ENCODE measurements at regions of chr2 and their contacts with region 1.

Region 1: GRCh38 chr2:157302492-157303099 is 23.0 kb downstream of the ERMN start:
- DNase-seq: peak; percentile 49
- H3K4me3 Mint-ChIP-seq: no peak overlapping the region
- H3K27ac Mint-ChIP-seq: no peak overlapping the region
- H3K4me1 Mint-ChIP-seq: peaks cover 24% of the 10 kb centered on the region
- H3K27me3 Mint-ChIP-seq: peaks cover 6% of the 10 kb centered on the region

Region 2: DNA sequence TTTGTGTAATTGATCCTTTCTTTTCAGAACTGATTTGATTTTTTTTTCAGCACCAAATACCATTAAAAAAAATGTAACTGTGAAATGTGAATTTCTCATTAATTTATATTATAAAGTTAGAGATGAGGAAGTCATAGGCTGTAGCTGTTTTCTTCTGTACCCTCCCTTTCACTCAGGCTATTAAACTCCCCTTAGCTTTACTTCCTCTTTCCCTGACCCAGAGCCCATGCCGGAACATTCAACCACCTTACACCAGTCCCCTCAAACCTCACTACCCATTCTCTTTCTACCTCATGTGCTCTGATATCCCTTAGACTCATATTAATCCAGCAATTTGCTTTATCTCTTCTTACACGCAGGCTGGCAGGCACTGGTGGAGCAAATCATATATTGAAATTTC is 32.7 kb before region 1 on chr2:
- CTCF ChIA-PET with region 1: no interaction called
- POLR2A ChIA-PET with region 1: no interaction called
- DNase-seq: no peak
- H3K4me3 Mint-ChIP-seq: no peak overlapping the region
- H3K27ac Mint-ChIP-seq: no peak overlapping the region
- H3K4me1 Mint-ChIP-seq: peaks cover 20% of the 10 kb centered on the region
- H3K27me3 Mint-ChIP-seq: no peaks in the 10 kb centered on the region

Region 3: DNA sequence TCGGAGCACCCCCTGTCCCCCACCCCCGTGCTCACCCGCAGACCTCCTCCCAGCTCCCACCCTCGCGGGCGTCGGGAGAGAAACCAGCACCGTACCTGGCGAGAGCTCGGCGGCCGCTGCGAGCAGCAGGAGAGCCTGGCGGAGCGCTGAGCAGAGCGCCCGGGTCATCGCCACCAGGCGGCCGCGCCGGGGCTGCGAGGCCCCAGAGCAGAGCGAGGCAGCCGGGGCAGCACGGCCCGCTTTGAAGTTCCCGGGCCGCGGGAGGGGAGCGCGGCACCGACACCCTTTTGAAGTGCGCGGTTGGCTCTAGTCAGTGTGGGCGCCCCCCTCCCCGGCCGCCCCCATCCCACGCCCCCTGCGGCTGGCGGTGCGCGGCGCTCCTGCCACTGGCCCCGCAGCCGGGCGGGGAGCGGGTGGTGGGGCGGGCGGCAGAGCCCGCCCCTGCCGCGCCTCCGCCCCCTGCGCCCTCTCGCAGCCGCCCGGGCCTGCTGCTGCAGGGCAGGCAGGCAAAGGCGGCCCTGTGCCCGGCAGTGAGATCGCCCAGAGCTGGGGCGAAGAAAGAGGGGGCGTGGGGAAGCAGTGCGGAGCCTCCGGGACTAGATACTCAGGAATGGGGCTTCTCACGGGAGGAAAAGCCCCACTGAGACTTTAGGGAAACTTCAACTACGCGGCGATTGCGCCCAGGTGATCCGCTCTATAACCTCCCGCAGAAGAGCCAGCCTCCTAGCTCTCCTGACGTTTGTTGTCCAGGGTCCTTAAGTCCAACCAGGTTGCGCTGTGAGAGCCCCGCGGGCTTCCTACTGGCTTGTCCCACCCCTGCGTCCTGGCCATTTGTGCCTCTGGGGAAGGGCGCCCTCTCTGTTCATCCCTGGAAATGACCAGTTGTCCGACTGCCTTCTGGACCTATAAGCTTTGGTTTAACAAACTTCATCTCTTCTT is 326.1 kb after region 1 on chr2 and contains the start of gene ACVR1C:
- CTCF ChIA-PET with region 1: interaction called, 14 read pairs
- POLR2A ChIA-PET with region 1: no interaction called
- DNase-seq: peak; percentile 68
- H3K4me3 Mint-ChIP-seq: peak within 1 kb of the TSS; percentile 88
- H3K27ac Mint-ChIP-seq: peak within 1 kb of the TSS; percentile 80
- H3K4me1 Mint-ChIP-seq: peaks cover 36% of the 10 kb centered on the region
- H3K27me3 Mint-ChIP-seq: peaks cover 7% of the 10 kb centered on the region
- total RNA-seq, gene ACVR1C: 2.2 to 2.5 TPM

Measured in activated CD4-positive, alpha-beta T cell treated with anti-CD3 and anti-CD28 coated beads, Interleukin-2, amount 10 ng/mL, durations not matched to agents 7 days and 5 days (primary cell).